Activated naive CD4-positive, alpha-beta T cell treated with anti-CD3 and anti-CD28 coated beads for 36 hours (primary cell): ENCODE measurements at regions of chr10 and their contacts with region 1.

Region 1: GRCh38 chr10:123043409-123043925 is 34.7 kb downstream of the ACADSB start:
- DNase-seq: peak; percentile 60
- H3K4me3 Mint-ChIP-seq: no peak overlapping the region
- H3K27ac Mint-ChIP-seq: no peak overlapping the region
- H3K4me1 Mint-ChIP-seq: peaks cover 3% of the 10 kb centered on the region
- H3K27me3 Mint-ChIP-seq: no peaks in the 10 kb centered on the region

Region 2: GRCh38 chr10:123559066-123559822 is 515.8 kb after region 1 on chr10:
- CTCF ChIA-PET with region 1: interaction called, 3 read pairs
- intact Hi-C with region 1: loop called (anchors 1 kb)
- DNase-seq: peak; percentile 72
- H3K4me3 Mint-ChIP-seq: no peak overlapping the region
- H3K27ac Mint-ChIP-seq: no peak overlapping the region
- H3K4me1 Mint-ChIP-seq: no peaks in the 10 kb centered on the region
- H3K27me3 Mint-ChIP-seq: peaks cover 19% of the 10 kb centered on the region